ENCODE measurements at regions of chr2 and their contacts with region 1.

Region 1: GRCh38 chr2:60468382-60469085 is 84.9 kb downstream of the BCL11A start:
- DNase-seq: no peak
- H3K4me3 ChIP-seq: no peak overlapping the region
- H3K27ac ChIP-seq: no peak overlapping the region
- H3K4me1 ChIP-seq: no peaks in the 10 kb centered on the region
- H3K27me3 ChIP-seq: peaks cover 56% of the 10 kb centered on the region
- CTCF ChIP-seq: no peak

Region 2: GRCh38 chr2:61065715-61066709 is 597.5 kb after region 1 on chr2 and contains the start of gene SANBR:
- CTCF ChIA-PET with region 1: interaction called, 11 read pairs
- POLR2A ChIA-PET with region 1: no interaction called
- intact Hi-C with region 1: no loop called
- DNase-seq: peak in 1 of 2 experiments; percentile 95
- H3K4me3 ChIP-seq: peak within 1 kb of the TSS; percentile 84
- H3K27ac ChIP-seq: no peak within 1 kb of the TSS
- H3K4me1 ChIP-seq: peaks cover 8% of the 10 kb centered on the region
- H3K27me3 ChIP-seq: no peaks in the 10 kb centered on the region
- CTCF ChIP-seq: no peak
- total RNA-seq, gene SANBR: 12.6 and 13.8 TPM in 2 replicates

Measured in PC-9 (cell line).